GM18951 (cell line): ENCODE measurements at regions of chr4 and their contacts with region 1.

Region 1: DNA sequence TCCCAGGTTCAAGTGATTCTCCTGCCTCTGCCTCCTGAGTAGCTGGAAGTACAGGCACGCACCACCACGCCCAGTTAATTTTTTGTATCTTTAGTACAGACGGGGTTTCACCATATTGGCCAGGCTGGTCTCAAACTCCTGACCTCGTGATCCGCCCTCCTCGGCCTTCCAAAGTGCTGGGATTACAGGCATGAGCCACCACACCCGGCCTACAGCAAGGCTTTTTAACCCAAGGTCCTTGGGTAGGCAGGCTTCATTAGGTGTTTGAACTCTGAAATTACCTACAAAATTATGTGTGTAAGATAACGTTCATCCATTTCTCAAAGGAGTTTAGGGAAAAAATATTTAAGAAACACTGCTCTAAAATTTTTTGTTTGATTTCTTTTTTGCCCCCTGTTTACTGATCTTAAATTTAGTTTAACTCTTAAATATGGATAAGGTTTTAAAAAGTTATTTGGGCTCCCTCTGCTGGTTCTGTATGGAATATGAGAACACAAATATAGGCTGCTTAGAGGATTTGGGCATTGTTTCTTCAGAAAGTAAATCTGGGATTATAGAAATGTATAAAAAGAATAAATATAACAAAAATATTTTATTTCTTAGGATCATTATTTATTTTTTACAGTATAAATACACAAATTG is 92.8 kb downstream of the CBR4 start:
- POLR2A ChIP-seq: no peak

Region 2: GRCh38 chr4:168045354-168045753 is 871.9 kb before region 1 on chr4:
- in situ Hi-C with region 1: no loop called
- POLR2A ChIP-seq: no peak

Region 3: GRCh38 chr4:168177546-168178149 is 739.6 kb before region 1 on chr4:
- in situ Hi-C with region 1: loop called (anchors 10 kb)
- POLR2A ChIP-seq: no peak

Region 4: DNA sequence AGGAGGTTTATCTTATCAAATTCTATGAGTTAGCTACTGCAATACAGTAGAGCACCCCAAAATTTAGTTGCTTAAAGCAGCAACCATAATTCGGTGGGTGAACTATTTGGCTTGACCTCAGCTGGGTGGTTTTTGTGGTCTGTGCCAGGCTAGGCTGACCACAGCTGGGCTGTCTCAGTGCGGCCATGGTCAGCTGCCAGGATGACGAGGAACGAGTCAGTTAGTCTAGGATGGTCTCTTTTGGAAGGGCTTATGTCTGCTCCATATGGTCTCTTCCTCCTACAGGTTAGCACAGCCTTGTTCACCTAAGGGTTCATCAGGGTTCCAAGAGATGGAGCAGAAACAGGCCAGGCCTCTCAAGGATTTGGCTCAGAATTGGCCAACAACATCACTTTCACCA is 210.1 kb before region 1 on chr4:
- in situ Hi-C with region 1: loop called (anchors 10 kb)
- POLR2A ChIP-seq: no peak